Mucosa of descending colon (tissue), 3 donors: ENCODE measurements at regions of chr5 and their contacts with region 1.

Region 1: DNA sequence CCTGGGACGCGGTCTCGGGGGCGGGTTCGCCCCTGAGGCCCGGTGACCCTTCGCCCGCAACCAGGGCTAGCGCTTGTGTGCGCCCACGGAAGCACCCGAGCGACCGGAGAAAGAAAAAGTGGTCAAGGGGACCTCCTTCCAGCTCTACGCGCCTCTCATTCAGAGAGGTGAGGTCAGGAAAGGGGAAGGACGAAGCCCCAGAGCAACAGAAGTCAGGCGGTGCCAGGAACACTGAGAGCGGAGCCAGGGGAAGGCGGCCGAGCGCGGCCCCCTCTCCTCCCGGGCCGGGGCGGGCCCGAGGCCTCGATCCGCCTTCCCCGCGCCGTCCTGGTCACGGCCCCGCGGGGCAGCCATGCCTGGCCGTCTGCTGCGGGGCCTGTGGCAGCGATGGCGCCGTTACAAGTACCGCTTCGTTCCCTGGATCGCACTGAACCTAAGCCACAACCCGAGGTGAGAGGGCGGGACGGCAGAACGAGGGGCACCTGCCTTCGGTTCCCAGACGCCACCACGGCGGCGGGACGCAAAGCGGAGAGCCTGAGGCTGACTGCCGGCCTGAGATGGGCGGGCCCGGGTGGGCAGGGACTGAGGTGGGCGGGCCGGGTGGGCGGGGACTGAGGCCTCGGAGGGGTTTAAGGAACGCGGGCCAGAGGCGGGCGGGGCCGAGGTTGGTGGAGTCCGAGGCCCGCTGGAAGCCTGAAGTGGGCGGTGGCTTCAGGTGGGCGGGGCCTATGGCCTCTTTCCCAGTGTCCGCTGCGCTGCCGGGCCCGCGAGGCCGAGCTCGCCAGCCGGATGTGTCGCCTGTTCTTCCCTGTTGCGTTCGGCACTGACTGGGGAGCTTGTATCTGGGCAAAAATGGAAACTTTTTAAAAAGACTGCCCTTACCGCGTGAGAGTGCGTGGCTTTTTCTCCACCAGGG is at the start of gene SETD9:
- DNase-seq: peak; percentile 99
- ATAC-seq: peak; percentile 93
- H3K4me3 ChIP-seq: peak within 1 kb of the TSS; percentile 31
- H3K4me1 ChIP-seq: peaks cover 7% of the 10 kb centered on the region
- CTCF ChIP-seq: no peak
- total RNA-seq, gene SETD9: 11.1 to 23.8 (median 18.9) TPM

Region 2: DNA sequence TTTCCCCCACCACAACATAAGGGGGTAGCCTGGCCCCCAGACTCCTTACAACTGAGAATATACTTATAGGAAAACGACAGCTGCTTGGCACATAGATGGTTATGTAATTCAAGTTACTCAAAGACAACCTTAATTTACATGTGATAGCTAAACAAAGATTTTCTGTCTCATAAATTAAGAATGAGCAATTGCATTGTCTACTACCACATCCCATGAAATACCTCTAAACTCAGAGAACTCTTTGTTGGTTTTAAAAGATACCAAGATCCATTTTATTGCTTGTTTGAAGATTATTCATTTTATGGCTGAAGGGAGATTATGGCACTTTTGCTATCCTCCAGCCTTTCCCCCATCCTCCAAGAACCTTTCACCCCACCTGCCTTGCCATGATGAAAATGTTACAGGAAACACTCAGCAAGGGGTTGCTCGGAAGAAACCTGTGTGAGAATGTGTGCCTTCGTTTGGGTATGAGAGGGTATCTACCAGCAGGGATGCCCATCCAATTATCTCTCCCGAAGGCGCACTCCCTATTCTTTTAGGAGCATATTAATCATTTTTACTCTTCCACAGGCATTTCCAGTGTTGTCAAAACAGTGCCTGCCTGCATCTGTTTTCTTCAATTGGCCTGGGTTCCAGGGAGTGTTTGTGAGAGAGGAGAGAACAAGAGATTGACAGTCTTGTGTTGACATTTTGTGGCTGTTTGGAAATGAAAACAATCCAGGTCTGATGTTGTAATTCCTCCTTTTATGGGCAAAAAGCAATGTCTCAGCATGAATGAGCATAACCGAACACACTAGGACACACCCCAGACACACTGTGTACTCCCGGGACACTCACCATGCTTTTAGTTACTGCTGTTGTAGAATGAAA is 468.4 kb before region 1 on chr5:
- intact Hi-C with region 1: no loop called
- DNase-seq: peak in 1 of 3 donors; percentile 26
- ATAC-seq: peak; percentile 97
- H3K4me3 ChIP-seq: no peak overlapping the region
- H3K4me1 ChIP-seq: peaks cover 9% of the 10 kb centered on the region
- CTCF ChIP-seq: no peak

Region 3: DNA sequence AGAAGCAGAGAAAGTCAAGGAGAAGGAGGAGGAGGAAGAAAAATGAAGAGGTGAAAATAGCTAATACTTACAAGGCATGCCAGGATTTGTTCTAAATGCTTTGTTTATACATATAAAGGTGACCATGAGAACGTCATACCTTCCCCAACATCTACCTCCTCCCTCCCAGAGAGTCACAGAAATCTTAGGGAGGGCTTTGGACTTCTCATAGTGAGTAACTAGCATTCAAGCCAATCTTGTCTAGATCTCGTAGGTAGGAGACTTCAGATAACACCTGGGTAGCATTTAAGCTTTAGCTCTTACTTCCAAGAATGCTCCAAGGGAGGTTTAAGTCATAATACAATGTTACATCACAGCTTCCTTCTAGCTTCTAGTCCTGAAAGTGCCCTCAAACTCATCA is 227.8 kb after region 1 on chr5:
- intact Hi-C with region 1: loop called in 1 of 2 experiments (anchors 10 kb)
- DNase-seq: no peak
- ATAC-seq: no peak
- H3K4me3 ChIP-seq: no peak overlapping the region
- H3K4me1 ChIP-seq: no peaks in the 10 kb centered on the region
- CTCF ChIP-seq: no peak

Region 4: GRCh38 chr5:57221049-57221568 is 311.6 kb after region 1 on chr5:
- intact Hi-C with region 1: loop called in 1 of 2 experiments (anchors 10 kb)
- DNase-seq: peak in 1 of 3 donors; percentile 69
- ATAC-seq: peak; percentile 78
- H3K4me3 ChIP-seq: no peak overlapping the region
- H3K4me1 ChIP-seq: no peaks in the 10 kb centered on the region
- CTCF ChIP-seq: peak; percentile 82